ENCODE measurements at regions of chr7 and their contacts with region 1.

Region 1: GRCh38 chr7:83410989-83411591 is 237.8 kb downstream of the SEMA3E start:
- DNase-seq: no peak
- H3K4me3 ChIP-seq: no peak overlapping the region
- H3K27ac ChIP-seq: no peak overlapping the region
- H3K4me1 ChIP-seq: no peaks in the 10 kb centered on the region
- H3K27me3 ChIP-seq: no peaks in the 10 kb centered on the region
- CTCF ChIP-seq: peak; percentile 59

Region 2: DNA sequence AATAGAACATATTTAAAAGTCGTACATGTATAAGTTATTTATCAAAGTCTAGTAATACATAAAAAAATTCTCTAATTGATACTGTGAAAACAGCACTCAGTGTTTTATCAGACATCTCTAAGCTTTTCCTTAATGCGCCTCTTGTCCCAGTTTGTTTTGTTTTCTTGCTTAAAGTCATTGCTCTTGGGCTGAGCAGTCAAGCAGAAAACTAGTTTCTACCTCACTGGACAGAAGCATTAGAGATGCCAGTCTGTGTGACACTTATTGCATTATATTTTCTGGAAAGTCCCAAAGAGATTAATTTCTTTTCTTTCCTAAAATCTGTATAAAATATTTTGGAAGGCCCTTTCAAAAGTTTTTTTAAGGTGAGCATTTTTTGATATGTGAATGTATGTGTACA is 484.6 kb before region 1 on chr7:
- intact Hi-C with region 1: no loop called
- DNase-seq: no peak
- H3K4me3 ChIP-seq: no peak overlapping the region
- H3K27ac ChIP-seq: no peak overlapping the region
- H3K4me1 ChIP-seq: no peaks in the 10 kb centered on the region
- H3K27me3 ChIP-seq: no peaks in the 10 kb centered on the region
- CTCF ChIP-seq: no peak

Region 3: DNA sequence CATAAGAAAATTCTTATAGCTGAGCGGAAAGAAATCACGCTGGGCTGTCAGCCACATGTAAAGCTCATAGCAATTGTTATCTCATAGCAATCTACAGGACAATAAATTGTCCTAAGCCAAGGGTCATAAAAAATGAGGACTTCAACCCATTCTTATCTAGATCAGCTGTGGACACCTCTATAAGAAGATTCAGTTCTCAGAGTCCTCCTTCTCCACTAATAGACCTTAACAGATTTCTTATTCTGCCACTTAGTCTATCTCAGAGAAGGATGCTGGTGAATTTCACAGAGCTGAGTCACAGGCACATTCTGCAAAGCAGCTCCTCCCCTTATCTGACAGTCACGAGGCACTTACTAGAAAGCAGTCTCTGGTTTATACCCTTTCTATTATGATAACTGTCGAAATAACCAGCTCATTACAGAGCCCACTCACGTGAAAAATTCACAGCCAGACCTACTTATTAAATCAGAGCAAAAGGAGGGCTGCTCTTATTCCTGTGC is 63.1 kb before region 1 on chr7:
- intact Hi-C with region 1: no loop called
- DNase-seq: no peak
- H3K4me3 ChIP-seq: no peak overlapping the region
- H3K27ac ChIP-seq: no peak overlapping the region
- H3K4me1 ChIP-seq: no peaks in the 10 kb centered on the region
- H3K27me3 ChIP-seq: no peaks in the 10 kb centered on the region
- CTCF ChIP-seq: no peak

Region 4: DNA sequence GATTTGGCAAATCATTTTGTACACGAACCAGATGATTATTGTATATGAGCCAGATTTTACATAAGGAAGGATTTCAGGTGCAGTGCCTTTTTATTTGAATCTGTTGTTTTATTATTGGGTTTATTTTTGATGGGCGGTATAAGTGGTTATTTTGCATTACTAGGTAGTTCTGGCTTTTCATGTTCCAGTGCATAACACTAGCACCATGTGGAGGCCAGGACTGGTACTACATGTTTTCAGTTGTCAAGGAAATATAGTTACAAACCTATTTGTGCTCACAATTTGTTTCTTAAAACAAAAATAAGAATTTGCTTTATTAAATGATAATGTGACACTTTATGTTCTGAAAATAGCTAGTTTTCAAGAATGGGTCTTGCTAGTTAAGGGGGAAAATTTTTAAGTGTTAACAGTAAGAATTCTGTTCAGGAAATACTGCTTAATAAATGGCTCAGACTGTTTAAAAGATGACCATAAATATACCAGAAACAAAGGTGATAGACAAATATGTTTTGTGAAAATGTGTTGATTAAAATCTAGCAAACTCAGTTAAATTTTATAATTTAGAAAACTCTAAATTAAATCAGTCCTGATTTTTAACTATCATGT is 245.0 kb after region 1 on chr7:
- intact Hi-C with region 1: loop called (anchors 5 kb)
- DNase-seq: peak; percentile 36
- H3K4me3 ChIP-seq: no peak overlapping the region
- H3K27ac ChIP-seq: no peak overlapping the region
- H3K4me1 ChIP-seq: no peaks in the 10 kb centered on the region
- H3K27me3 ChIP-seq: no peaks in the 10 kb centered on the region
- CTCF ChIP-seq: peak; percentile 67

Measured in colonic mucosa (tissue), 4 donors.